Natural killer cell (primary cell): ENCODE measurements at regions of chr2 and their contacts with region 1.

Region 1: GRCh38 chr2:68774569-68775271 is 40.1 kb downstream of the ARHGAP25 start:
- DNase-seq: peak; percentile 62 to 78
- ATAC-seq: peak; percentile 55 to 83 (median 72)
- H3K4me3 ChIP-seq: peak overlapping the region; percentile 85
- H3K4me3 Mint-ChIP-seq: peak overlapping the region; percentile 96
- H3K27ac ChIP-seq: peak overlapping the region; percentile 96
- H3K27ac Mint-ChIP-seq: peak overlapping the region in 1 of 2 donors; percentile 93
- H3K4me1 ChIP-seq: peaks cover 74% of the 10 kb centered on the region
- H3K4me1 Mint-ChIP-seq: peaks cover 93 to 94% of the 10 kb centered on the region in 2 donors
- H3K27me3 ChIP-seq: no peaks in the 10 kb centered on the region
- H3K27me3 Mint-ChIP-seq: no peaks in the 10 kb centered on the region
- CTCF ChIP-seq: no peak

Region 2: DNA sequence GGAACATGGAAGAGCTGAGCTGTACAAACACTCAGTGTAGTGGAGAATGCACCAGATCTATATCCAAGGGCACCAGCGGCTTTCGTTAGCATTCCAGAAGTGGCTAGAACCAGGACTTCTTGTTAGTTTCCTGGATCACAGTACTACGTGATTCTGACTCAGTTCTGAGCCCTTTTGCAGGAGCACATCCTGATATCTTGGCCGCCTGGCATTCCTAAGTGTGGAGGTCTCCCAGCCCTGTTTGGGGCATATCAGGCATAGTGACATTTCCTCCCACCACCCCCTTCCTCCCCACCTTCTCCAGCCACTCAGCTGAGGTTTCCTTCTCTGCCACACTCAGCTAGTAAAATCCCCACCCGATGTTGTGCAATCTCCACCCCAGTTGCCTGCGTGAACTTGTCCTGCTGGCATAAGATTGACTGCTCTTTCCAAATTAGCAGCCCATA is 33.1 kb after region 1 on chr2:
- intact Hi-C with region 1: loop called (anchors 5 kb)
- DNase-seq: peak; percentile 40 to 54
- ATAC-seq: peak; percentile 86 to 94 (median 89)
- H3K4me3 ChIP-seq: no peak overlapping the region
- H3K4me3 Mint-ChIP-seq: peak overlapping the region; percentile 54
- H3K27ac ChIP-seq: peak overlapping the region; percentile 69
- H3K27ac Mint-ChIP-seq: peak overlapping the region in 1 of 2 donors; percentile 90
- H3K4me1 ChIP-seq: peaks cover 30% of the 10 kb centered on the region
- H3K4me1 Mint-ChIP-seq: peaks cover 61 to 72% of the 10 kb centered on the region in 2 donors
- H3K27me3 ChIP-seq: no peaks in the 10 kb centered on the region
- H3K27me3 Mint-ChIP-seq: no peaks in the 10 kb centered on the region
- CTCF ChIP-seq: no peak

Region 3: GRCh38 chr2:68832233-68832869 is 57.6 kb after region 1 on chr2:
- intact Hi-C with region 1: loop called (anchors 2 kb)
- DNase-seq: peak; percentile 53 to 54
- ATAC-seq: peak; percentile 82 to 84 (median 83)
- H3K4me3 ChIP-seq: no peak overlapping the region
- H3K4me3 Mint-ChIP-seq: peak overlapping the region; percentile 61
- H3K27ac ChIP-seq: peak overlapping the region; percentile 35
- H3K27ac Mint-ChIP-seq: peak overlapping the region; percentile 92 to 97
- H3K4me1 ChIP-seq: peaks cover 38% of the 10 kb centered on the region
- H3K4me1 Mint-ChIP-seq: peaks cover 56 to 59% of the 10 kb centered on the region in 2 donors
- H3K27me3 ChIP-seq: no peaks in the 10 kb centered on the region
- H3K27me3 Mint-ChIP-seq: no peaks in the 10 kb centered on the region
- CTCF ChIP-seq: no peak